ENCODE measurements at regions of chr17 and their contacts with region 1.

Region 1: DNA sequence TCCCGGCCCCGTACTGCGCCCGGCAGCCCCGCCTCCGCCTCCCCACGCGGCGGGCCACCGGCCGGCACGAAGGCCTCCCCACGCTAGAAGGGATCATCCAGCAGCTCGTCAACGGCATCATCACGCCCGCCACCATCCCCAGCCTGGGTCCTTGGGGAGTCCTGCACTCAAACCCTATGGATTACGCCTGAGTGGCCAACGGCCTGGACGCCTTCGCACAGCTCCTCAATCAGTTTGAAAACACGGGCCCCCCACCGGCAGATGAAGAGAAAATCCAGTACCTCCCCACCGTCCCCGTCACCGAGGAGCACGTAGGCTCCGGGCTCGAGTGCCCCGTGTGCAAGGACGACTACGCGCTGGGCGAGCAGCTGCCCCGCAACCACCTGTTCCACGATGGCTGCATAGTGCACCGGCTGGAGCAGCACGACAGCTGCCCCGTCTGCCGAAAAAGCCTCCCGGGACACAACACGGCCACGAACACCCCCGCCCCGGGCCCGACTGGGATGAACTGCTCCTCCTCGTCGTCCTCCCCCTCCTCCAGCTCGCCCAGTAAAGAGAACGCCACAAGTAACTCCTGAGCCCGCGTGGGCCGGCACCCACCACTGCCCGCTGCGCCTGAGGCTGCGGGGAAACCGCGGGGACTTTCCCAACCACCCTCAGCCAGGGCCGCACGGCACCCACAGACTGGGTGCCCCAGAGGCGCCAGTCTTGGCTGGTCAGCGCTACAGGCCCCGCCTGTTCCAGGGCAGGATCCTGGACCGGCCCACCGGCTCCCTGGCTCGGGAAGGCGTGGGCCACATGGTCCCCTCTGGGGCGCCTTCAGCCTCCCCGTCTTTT is 39.0 kb upstream of the AKAP1 start:
- DNase-seq: no peak
- H3K4me3 ChIP-seq: no peak overlapping the region
- H3K27ac ChIP-seq: no peak overlapping the region
- H3K4me1 ChIP-seq: peaks cover 0 to 2% (median under 1%) of the 10 kb centered on the region in 4 experiments; a peak in 2 of 7 replicates
- H3K27me3 ChIP-seq: no peaks in the 10 kb centered on the region
- CTCF ChIP-seq: no peak
- EP300 ChIP-seq: no peak
- POLR2A ChIP-seq: no peak
- RAD21 ChIP-seq: no peak

Region 2: DNA sequence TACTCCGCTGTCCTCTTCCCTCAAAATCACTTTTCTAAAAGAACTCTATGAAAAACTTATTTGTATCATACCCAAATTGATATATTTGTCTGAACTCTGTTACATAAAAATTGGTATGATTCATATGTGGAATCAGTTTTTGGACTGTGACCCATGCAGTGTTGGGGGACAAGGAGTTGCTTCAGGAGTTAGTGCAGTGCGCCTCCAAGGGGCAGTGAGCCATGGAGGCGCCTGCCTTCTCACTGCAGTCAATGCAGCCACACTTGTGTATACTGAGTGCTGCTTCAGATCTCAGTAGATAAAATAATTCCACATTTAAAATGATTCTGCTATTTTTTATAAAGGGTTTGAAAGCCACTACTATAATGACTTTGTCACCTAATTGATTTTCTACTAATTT is 179.6 kb before region 1 on chr17:
- CTCF ChIA-PET with region 1: no interaction called
- POLR2A ChIA-PET with region 1: no interaction called
- DNase-seq: no peak
- H3K4me3 ChIP-seq: no peak overlapping the region
- H3K27ac ChIP-seq: no peak overlapping the region
- H3K4me1 ChIP-seq: peaks cover 0 to 2% (median 0%) of the 10 kb centered on the region in 4 experiments; a peak in 1 of 7 replicates
- H3K27me3 ChIP-seq: no peaks in the 10 kb centered on the region
- CTCF ChIP-seq: peak; percentile 15 to 51 (median 25); a peak in 2 of 4 replicates
- EP300 ChIP-seq: no peak
- POLR2A ChIP-seq: no peak
- RAD21 ChIP-seq: peak; percentile 41 to 52

Region 3: GRCh38 chr17:56966338-56966737 is 79.7 kb before region 1 on chr17:
- CTCF ChIA-PET with region 1: no interaction called
- POLR2A ChIA-PET with region 1: no interaction called
- DNase-seq: no peak
- H3K4me3 ChIP-seq: no peak overlapping the region
- H3K27ac ChIP-seq: no peak overlapping the region
- H3K4me1 ChIP-seq: no peaks in the 10 kb centered on the region
- H3K27me3 ChIP-seq: no peaks in the 10 kb centered on the region
- CTCF ChIP-seq: no peak
- EP300 ChIP-seq: no peak
- POLR2A ChIP-seq: no peak
- RAD21 ChIP-seq: no peak

Region 4: DNA sequence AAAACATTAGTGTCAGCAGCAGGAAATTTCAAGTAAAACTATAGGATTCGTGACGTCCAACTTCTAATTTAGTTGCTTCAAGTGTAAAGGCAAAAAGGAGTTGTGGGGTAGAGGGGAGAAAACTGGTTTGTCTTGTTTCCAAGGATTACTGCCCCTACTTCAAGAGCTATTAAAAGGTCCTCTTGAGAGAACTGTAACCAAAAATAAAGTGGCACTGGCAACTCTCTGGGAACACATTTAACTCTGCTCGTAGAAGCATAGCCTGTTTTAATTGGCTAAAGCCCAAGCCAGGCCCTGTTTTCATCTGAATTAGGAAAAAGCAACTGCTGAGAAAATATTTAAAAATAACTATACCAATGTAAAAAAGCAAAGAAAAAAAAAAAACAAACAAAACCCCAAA is 12.8 kb before region 1 on chr17:
- CTCF ChIA-PET with region 1: interaction called, 42 read pairs
- POLR2A ChIA-PET with region 1: interaction called, 4 read pairs
- DNase-seq: no peak
- H3K4me3 ChIP-seq: no peak overlapping the region
- H3K27ac ChIP-seq: no peak overlapping the region
- H3K4me1 ChIP-seq: peaks cover 0 to 5% (median 2%) of the 10 kb centered on the region in 4 experiments; a peak in 3 of 7 replicates
- H3K27me3 ChIP-seq: no peaks in the 10 kb centered on the region
- CTCF ChIP-seq: no peak
- EP300 ChIP-seq: no peak
- POLR2A ChIP-seq: no peak
- RAD21 ChIP-seq: no peak

Measured in H1 (cell line).